ENCODE measurements at regions of chr20 and their contacts with region 1.

Region 1: DNA sequence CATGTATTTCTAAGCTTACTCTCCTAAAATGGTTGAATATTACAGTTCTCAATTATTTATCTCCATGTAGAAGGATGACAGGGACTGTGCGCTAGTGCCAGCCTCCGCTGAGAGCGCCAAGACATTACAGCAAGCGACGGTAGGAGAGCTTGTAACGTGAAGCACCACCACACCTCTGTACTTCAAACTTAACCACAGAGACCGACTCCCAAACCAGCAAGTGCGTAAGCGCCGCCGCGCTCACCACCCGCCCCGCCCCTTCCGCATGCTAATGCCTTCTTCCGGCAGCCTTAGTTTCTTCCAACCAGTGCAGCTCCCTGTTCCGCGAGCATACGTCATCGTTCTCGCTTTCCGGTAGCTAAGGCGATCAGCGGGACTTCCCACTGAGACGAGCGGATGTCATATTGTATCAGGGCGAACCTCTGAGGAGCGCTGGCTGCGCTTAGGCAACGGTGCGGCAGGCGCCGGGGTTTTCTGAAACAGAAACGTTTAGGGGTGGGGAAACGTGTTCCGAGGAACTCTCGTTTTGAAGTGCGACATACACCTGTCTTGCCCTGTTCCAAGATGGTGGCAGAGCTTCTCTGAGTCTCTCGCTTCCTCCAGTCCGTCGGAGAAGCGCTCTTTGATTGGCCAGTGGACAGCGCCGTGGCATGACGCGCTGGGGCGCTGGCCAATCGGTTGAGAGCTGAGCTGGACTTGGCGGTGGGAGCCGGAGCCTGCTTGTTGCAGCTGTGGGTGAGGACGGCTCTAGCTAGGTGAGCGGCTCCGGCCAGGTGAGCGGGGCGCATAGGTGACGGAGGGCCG is at the start of gene SEC23B:
- DNase-seq: peak; percentile 98
- ATAC-seq: peak; percentile 95
- H3K4me3 Mint-ChIP-seq: peak within 1 kb of the TSS; percentile 97
- H3K27ac Mint-ChIP-seq: peak within 1 kb of the TSS; percentile 100
- H3K4me1 Mint-ChIP-seq: peaks cover 19% of the 10 kb centered on the region
- H3K27me3 Mint-ChIP-seq: peaks cover 13% of the 10 kb centered on the region
- CTCF ChIP-seq: no peak
- total RNA-seq, gene SEC23B: 57.0 to 67.1 TPM (median 59.6 TPM) in 3 replicates

Region 2: GRCh38 chr20:18443835-18444234 is 63.6 kb before region 1 on chr20:
- CTCF ChIA-PET with region 1: no interaction called
- POLR2A ChIA-PET with region 1: no interaction called
- DNase-seq: no peak
- ATAC-seq: no peak
- H3K4me3 Mint-ChIP-seq: no peak overlapping the region
- H3K27ac Mint-ChIP-seq: no peak overlapping the region; the same call in 1 of the 2 replicates
- H3K4me1 Mint-ChIP-seq: no peaks in the 10 kb centered on the region
- H3K27me3 Mint-ChIP-seq: no peaks in the 10 kb centered on the region
- CTCF ChIP-seq: no peak

Region 3: DNA sequence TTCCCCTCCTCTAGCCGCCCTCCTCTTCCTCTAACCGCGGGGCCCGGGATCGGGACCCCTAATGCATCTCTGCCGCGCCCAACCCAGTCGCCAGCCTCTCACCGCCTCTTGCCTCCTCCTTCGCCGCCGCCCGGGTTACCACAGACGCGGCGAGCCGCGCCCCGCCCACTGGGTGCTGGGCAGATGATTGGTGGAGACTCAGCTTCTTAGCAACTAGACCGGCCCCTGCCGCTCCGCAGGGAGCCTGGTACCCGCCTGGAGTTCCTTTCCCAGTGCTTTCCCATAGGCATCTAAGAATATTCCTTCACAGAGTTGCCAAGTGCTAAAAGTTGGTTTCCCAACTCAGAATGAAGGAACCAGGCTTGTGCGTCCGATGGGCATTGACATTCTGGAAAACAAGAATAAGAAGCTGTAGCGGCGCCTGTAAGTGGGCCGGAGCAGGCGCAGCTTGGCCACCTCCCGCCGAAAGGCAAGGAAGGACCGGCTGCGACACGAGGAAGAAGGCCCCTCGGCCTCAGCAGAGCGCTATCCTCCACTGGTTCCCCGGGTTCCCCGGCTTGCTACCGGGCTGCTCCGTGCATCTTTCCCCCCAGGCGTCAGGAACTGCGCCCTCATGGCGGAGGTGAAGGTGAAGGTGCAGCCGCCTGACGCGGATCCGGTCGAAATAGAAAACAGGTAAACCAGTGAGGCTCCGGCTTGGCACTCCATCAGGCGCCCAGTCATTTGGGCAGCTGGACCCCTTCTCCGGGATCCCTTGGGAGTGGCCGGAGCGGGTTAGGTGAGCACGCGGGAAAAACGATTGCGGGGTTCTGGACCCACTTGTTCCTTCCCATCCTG is 40.3 kb before region 1 on chr20 and contains the starts of genes DZANK1 and POLR3F:
- CTCF ChIA-PET with region 1: interaction called, 5 read pairs
- POLR2A ChIA-PET with region 1: interaction called, 21 read pairs
- DNase-seq: peak; percentile 99
- ATAC-seq: peak; percentile 96
- H3K4me3 Mint-ChIP-seq: peak within 1 kb of the TSS; percentile 99
- H3K27ac Mint-ChIP-seq: peak within 1 kb of the TSS; percentile 100
- H3K4me1 Mint-ChIP-seq: peaks cover 12% of the 10 kb centered on the region
- H3K27me3 Mint-ChIP-seq: no peaks in the 10 kb centered on the region
- CTCF ChIP-seq: no peak
- total RNA-seq, gene DZANK1: 6.1 to 8.2 TPM (median 7.7 TPM) in 3 replicates
- total RNA-seq, gene POLR3F: 11.7 to 12.8 TPM (median 12.7 TPM) in 3 replicates

Region 4: DNA sequence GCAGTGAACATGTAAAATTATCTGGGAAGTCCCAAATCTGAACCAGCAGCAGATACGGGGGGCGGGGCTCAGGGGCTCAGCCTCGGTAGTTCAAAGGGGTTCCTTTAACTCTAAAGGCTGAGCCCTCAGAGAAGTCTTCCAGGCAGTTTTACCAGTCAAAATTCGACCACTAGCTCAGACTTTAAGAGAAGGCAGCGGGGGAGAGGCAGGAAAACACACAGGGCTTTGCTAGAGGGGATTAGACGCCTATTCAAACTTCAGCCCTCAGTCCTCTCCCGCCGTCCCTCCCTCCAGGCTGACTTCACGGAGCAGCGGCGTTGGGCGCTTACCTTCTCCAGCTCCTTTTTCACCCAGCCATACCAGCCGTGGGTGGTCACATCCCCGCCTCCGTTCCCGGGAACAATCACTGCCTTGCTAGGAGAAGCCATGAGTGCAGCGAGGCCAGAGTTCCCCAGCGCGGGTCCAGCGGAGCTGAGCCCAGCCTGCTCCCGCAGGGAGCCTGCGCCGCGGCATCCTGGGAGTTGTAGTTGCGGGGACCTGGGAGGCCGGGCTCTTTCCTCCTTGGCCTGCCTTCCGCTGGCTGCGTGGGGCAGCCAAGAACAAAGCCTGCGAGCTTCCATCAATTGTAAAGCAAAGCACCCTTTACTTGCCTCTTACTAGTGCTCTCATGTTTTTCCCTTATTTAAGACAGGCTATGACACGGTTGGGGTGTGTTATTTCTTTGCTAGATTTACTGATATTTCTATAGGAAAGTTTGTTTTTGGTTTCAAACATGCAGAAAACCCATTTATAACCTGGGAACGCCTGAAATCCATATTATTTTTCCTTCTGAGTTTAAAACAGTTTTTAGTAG is 10.5 kb before region 1 on chr20 and contains the start of gene RBBP9:
- CTCF ChIA-PET with region 1: interaction called, 6 read pairs
- POLR2A ChIA-PET with region 1: interaction called, 43 read pairs
- DNase-seq: peak; percentile 90
- ATAC-seq: peak; percentile 100
- H3K4me3 Mint-ChIP-seq: peak within 1 kb of the TSS; percentile 98
- H3K27ac Mint-ChIP-seq: peak within 1 kb of the TSS; percentile 89
- H3K4me1 Mint-ChIP-seq: peaks cover 12% of the 10 kb centered on the region
- H3K27me3 Mint-ChIP-seq: no peaks in the 10 kb centered on the region; the same call in 1 of the 2 replicates
- CTCF ChIP-seq: no peak
- total RNA-seq, gene RBBP9: 10.4 to 12.2 TPM (median 12.1 TPM) in 3 replicates

Region 5: DNA sequence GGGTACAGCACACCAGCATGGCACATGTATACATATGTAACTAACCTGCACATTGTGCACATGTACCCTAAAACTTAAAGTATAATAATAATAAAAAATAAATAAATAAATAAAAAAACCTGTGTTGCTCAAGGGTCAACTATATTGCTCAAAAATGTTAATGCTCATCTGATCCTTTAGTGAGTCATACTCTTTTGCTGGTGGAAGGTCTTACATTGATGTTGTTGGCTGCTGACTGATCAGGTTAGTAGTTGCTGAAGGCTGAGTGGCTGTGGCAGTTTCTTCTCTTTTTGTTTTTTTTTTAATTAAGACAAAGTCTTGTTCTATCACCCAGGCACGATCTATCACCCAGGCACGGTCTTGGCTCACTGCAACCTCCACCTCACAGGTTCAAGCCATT is 30.2 kb after region 1 on chr20:
- CTCF ChIA-PET with region 1: no interaction called
- POLR2A ChIA-PET with region 1: no interaction called
- DNase-seq: no peak
- ATAC-seq: no peak
- H3K4me3 Mint-ChIP-seq: no peak overlapping the region
- H3K27ac Mint-ChIP-seq: no peak overlapping the region
- H3K4me1 Mint-ChIP-seq: no peaks in the 10 kb centered on the region
- H3K27me3 Mint-ChIP-seq: no peaks in the 10 kb centered on the region
- CTCF ChIP-seq: no peak

Region 6: DNA sequence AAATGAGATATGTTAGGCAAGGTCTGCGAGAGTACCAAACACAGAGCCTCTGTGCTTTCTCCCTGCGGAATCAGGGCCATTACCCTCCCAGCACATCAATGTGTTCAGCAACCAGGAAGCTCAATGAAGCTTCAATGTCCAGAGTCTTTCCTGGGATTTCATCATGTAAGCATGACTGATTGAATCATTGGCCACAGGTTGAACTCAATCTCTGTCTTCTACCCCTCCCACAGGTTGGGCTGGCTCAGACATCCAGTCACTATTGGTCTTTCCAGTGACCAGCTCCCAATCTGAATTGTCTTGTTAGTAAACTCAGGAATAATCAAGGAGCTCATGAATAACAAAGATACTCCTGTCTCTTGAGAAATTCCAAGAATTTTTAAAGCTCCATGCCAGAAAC is 77.7 kb after region 1 on chr20:
- CTCF ChIA-PET with region 1: interaction called, 4 read pairs
- POLR2A ChIA-PET with region 1: interaction called, 11 read pairs
- DNase-seq: peak; percentile 31
- ATAC-seq: peak; percentile 29
- H3K4me3 Mint-ChIP-seq: no peak overlapping the region
- H3K27ac Mint-ChIP-seq: peak overlapping the region; percentile 32; the same call in 1 of the 2 replicates
- H3K4me1 Mint-ChIP-seq: peaks cover 21% of the 10 kb centered on the region
- H3K27me3 Mint-ChIP-seq: peaks cover 3% of the 10 kb centered on the region; the same call in 1 of the 2 replicates
- CTCF ChIP-seq: no peak

Measured in WTC11 (cell line).